ENCODE measurements at regions of chr11 and their contacts with region 1.

Region 1: GRCh38 chr11:61899146-61899841 is 7.9 kb upstream of the FADS3 start:
- DNase-seq: peak; percentile 75 to 89
- H3K4me3 ChIP-seq: no peak overlapping the region
- H3K27ac ChIP-seq: peak overlapping the region in 1 of 2 donors; percentile 27
- H3K4me1 ChIP-seq: peaks cover 0 to 6% (median 0%) of the 10 kb centered on the region in 4 donors
- H3K27me3 ChIP-seq: no peaks in the 10 kb centered on the region
- CTCF ChIP-seq: peak; percentile 99

Region 2: GRCh38 chr11:61671527-61671926 is 227.8 kb before region 1 on chr11:
- intact Hi-C with region 1: no loop called
- DNase-seq: no peak
- H3K4me3 ChIP-seq: no peak overlapping the region
- H3K27ac ChIP-seq: no peak overlapping the region
- H3K4me1 ChIP-seq: no peaks in the 10 kb centered on the region
- H3K27me3 ChIP-seq: peaks cover 0 to 24% of the 10 kb centered on the region in 2 donors
- CTCF ChIP-seq: no peak

Region 3: GRCh38 chr11:61947486-61948210 is 48.4 kb after region 1 on chr11:
- intact Hi-C with region 1: loop called (anchors 2 kb)
- DNase-seq: peak; percentile 96 to 97
- H3K4me3 ChIP-seq: no peak overlapping the region
- H3K27ac ChIP-seq: peak overlapping the region; percentile 41 to 64
- H3K4me1 ChIP-seq: peaks cover 0 to 31% (median 22%) of the 10 kb centered on the region in 4 donors
- H3K27me3 ChIP-seq: no peaks in the 10 kb centered on the region
- CTCF ChIP-seq: peak; percentile 93

Region 4: GRCh38 chr11:61974766-61975631 is 75.7 kb after region 1 on chr11:
- intact Hi-C with region 1: no loop called
- DNase-seq: peak in 1 of 2 donors; percentile 81
- H3K4me3 ChIP-seq: no peak overlapping the region
- H3K27ac ChIP-seq: peak overlapping the region; percentile 98 to 100
- H3K4me1 ChIP-seq: peaks cover 6 to 87% (median 67%) of the 10 kb centered on the region in 4 donors
- H3K27me3 ChIP-seq: no peaks in the 10 kb centered on the region
- CTCF ChIP-seq: no peak

Region 5: DNA sequence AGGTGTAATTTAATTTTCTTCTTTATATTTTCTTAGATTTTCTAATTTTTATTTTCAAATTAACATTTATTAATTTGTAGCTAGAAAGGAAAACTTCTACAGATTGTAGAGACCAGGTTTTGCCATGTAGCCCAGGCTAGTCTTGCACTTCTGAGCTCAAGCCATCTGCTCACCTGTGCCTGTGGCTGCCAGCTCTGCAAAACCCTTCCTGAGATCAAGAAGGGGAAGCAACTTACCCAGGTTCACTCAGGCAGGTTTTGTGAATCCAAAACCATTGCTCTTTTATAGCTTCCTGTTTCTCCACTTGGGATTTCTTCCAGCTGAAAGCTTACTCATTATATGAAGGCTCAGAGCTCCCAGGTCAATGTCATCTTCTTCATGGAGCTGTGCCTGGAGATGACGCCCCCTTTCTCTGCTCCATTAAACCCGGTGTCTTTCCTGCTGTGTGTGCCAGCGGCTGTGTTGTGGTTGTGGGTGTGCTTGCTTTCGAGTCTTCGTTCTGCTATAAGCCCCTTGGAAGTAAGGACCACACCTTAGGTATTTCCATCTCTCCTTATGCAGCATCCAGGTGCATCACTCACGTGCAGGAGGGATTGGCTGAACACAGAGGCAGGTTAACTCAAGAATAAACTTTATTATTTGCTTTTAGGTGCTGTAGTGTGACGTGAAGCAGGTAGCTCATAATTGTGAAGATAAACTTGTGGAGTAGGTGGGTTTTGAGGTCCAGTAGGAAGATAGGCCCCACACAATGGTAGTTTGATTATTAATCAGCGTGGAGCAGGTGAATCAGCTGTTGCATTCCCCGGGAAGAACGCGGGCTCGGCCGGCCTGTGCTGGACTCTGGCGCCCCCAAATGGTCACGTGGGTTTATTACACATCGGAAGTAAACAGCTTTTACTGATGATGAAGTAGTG is 182.3 kb after region 1 on chr11:
- intact Hi-C with region 1: loop called (anchors 2 kb)
- DNase-seq: peak; percentile 74 to 87
- H3K4me3 ChIP-seq: no peak overlapping the region
- H3K27ac ChIP-seq: no peak overlapping the region
- H3K4me1 ChIP-seq: no peaks in the 10 kb centered on the region
- H3K27me3 ChIP-seq: no peaks in the 10 kb centered on the region
- CTCF ChIP-seq: peak; percentile 92 to 94

Region 6: GRCh38 chr11:62108017-62108750 is 208.9 kb after region 1 on chr11:
- intact Hi-C with region 1: loop called (anchors 2 kb)
- DNase-seq: no peak
- H3K4me3 ChIP-seq: no peak overlapping the region
- H3K27ac ChIP-seq: peak overlapping the region; percentile 44 to 86
- H3K4me1 ChIP-seq: peaks cover 0 to 56% (median 29%) of the 10 kb centered on the region in 4 donors
- H3K27me3 ChIP-seq: no peaks in the 10 kb centered on the region
- CTCF ChIP-seq: peak; percentile 83 to 88

Measured in tibial artery (tissue), 4 donors.